CD4-positive, alpha-beta memory T cell (primary cell): ENCODE measurements at regions of chr2 and their contacts with region 1.

Region 1: GRCh38 chr2:135960656-135961551 is 24.5 kb downstream of the DARS1 start:
- DNase-seq: peak; percentile 38 to 55 (median 43)
- H3K4me3 ChIP-seq: peak overlapping the region in 1 of 2 donors; percentile 6
- H3K4me3 Mint-ChIP-seq: peak overlapping the region; percentile 9 to 79 (median 53)
- H3K27ac ChIP-seq: peak overlapping the region; percentile 60
- H3K27ac Mint-ChIP-seq: peak overlapping the region; percentile 76 to 96 (median 89)
- H3K4me1 ChIP-seq: peaks cover 49% of the 10 kb centered on the region
- H3K4me1 Mint-ChIP-seq: peaks cover 44 to 70% (median 55%) of the 10 kb centered on the region in 4 donors
- H3K27me3 ChIP-seq: no peaks in the 10 kb centered on the region
- H3K27me3 Mint-ChIP-seq: no peaks in the 10 kb centered on the region

Region 2: GRCh38 chr2:135913727-135914365 is 47.1 kb before region 1 on chr2:
- CTCF ChIA-PET with region 1: interaction called, 5 read pairs
- POLR2A ChIA-PET with region 1: interaction called, 3 read pairs
- intact Hi-C with region 1: loop called (anchors 5 kb)
- DNase-seq: peak; percentile 48 to 61 (median 58)
- H3K4me3 ChIP-seq: no peak overlapping the region
- H3K4me3 Mint-ChIP-seq: no peak overlapping the region
- H3K27ac ChIP-seq: no peak overlapping the region
- H3K27ac Mint-ChIP-seq: peak overlapping the region; percentile 34 to 90 (median 81)
- H3K4me1 ChIP-seq: no peaks in the 10 kb centered on the region
- H3K4me1 Mint-ChIP-seq: peaks cover 0 to 8% (median 3%) of the 10 kb centered on the region in 4 donors
- H3K27me3 ChIP-seq: no peaks in the 10 kb centered on the region
- H3K27me3 Mint-ChIP-seq: no peaks in the 10 kb centered on the region

Region 3: GRCh38 chr2:135948642-135949355 is 12.1 kb before region 1 on chr2:
- CTCF ChIA-PET with region 1: interaction called, 5 read pairs
- POLR2A ChIA-PET with region 1: interaction called, 13 read pairs
- intact Hi-C with region 1: loop called (anchors 1 kb)
- DNase-seq: peak; percentile 45 to 68 (median 58)
- H3K4me3 ChIP-seq: no peak overlapping the region
- H3K4me3 Mint-ChIP-seq: peak overlapping the region; percentile 38 to 80 (median 68)
- H3K27ac ChIP-seq: peak overlapping the region; percentile 61
- H3K27ac Mint-ChIP-seq: peak overlapping the region; percentile 81 to 95 (median 92)
- H3K4me1 ChIP-seq: peaks cover 36% of the 10 kb centered on the region
- H3K4me1 Mint-ChIP-seq: peaks cover 36 to 72% (median 53%) of the 10 kb centered on the region in 4 donors
- H3K27me3 ChIP-seq: no peaks in the 10 kb centered on the region
- H3K27me3 Mint-ChIP-seq: no peaks in the 10 kb centered on the region